ENCODE measurements at regions of chr7 and their contacts with region 1.

Region 1: DNA sequence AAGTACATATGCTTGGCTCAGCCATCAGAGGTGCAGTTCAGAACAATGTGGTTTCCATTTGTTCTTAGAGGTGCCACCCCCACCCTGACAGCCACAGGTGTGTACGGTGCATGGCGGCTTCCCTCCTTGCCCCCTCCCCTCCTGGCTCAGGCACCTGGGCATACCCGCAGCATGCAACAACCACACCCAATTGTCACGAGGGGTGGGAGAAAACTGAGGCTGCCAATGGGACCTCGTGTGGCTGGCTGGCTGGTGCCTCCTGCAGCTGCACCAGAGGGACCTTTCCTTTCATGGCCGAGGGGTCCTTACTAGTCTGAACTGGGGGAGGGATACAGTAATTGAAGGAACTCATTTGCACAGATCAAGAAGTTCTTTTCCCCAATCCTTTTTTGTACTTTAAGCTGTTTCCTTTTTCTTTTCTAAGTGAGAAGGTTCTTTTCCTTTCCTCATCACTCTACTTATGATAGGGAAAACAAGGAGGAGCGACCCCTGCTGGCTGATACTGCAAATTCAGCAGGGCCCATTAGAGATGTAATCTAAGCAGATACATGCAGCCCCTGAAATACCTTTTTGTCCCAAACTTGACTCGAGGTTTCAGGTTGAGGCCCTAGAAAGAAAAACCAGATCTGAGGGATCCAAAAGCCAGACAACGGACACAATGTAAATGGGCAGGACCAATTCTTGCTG is 305.3 kb downstream of the DNAJB9 start:
- DNase-seq: no peak
- ATAC-seq: no peak
- H3K4me3 ChIP-seq: no peak overlapping the region
- H3K27ac ChIP-seq: no peak overlapping the region
- H3K4me1 ChIP-seq: no peaks in the 10 kb centered on the region
- H3K27me3 ChIP-seq: no peaks in the 10 kb centered on the region
- CTCF ChIP-seq: no peak

Region 2: GRCh38 chr7:108613112-108613759 is 261.8 kb before region 1 on chr7:
- intact Hi-C with region 1: loop called in 1 of 2 experiments (anchors 10 kb)
- DNase-seq: no peak
- ATAC-seq: peak in 2 of 4 donors; percentile 44 to 68
- H3K4me3 ChIP-seq: no peak overlapping the region
- H3K27ac ChIP-seq: no peak overlapping the region
- H3K4me1 ChIP-seq: no peaks in the 10 kb centered on the region
- H3K27me3 ChIP-seq: no peaks in the 10 kb centered on the region
- CTCF ChIP-seq: peak; percentile 81

Region 3: GRCh38 chr7:108789451-108789850 is 85.5 kb before region 1 on chr7:
- intact Hi-C with region 1: no loop called
- DNase-seq: no peak
- ATAC-seq: no peak
- H3K4me3 ChIP-seq: no peak overlapping the region
- H3K27ac ChIP-seq: no peak overlapping the region
- H3K4me1 ChIP-seq: no peaks in the 10 kb centered on the region
- H3K27me3 ChIP-seq: no peaks in the 10 kb centered on the region
- CTCF ChIP-seq: no peak

Region 4: DNA sequence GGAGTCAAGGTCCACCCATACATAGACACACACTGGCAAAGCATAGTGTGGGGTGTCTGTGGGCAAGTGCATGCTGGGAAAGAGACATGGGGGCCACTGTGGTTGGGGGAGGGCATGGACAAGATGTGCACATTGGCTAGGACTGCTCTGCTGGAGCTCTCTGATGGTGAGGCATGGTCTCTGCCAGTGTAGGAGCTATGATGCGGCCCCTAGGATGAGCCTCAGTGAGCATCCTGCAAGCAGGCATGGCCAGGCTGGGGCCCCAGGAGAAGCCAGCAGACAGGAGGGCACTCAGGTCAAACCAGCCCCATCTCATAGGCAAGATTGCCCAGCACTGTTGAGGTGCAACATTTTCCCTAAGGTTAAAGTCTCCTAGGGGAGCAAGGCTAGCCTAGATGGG is 184.1 kb after region 1 on chr7:
- intact Hi-C with region 1: loop called in 1 of 2 experiments (anchors 5 kb)
- DNase-seq: peak in 1 of 2 donors; percentile 44
- ATAC-seq: no peak
- H3K4me3 ChIP-seq: no peak overlapping the region
- H3K27ac ChIP-seq: no peak overlapping the region
- H3K4me1 ChIP-seq: no peaks in the 10 kb centered on the region
- H3K27me3 ChIP-seq: no peaks in the 10 kb centered on the region
- CTCF ChIP-seq: no peak